ENCODE measurements at regions of chr12 and their contacts with region 1.

Region 1: DNA sequence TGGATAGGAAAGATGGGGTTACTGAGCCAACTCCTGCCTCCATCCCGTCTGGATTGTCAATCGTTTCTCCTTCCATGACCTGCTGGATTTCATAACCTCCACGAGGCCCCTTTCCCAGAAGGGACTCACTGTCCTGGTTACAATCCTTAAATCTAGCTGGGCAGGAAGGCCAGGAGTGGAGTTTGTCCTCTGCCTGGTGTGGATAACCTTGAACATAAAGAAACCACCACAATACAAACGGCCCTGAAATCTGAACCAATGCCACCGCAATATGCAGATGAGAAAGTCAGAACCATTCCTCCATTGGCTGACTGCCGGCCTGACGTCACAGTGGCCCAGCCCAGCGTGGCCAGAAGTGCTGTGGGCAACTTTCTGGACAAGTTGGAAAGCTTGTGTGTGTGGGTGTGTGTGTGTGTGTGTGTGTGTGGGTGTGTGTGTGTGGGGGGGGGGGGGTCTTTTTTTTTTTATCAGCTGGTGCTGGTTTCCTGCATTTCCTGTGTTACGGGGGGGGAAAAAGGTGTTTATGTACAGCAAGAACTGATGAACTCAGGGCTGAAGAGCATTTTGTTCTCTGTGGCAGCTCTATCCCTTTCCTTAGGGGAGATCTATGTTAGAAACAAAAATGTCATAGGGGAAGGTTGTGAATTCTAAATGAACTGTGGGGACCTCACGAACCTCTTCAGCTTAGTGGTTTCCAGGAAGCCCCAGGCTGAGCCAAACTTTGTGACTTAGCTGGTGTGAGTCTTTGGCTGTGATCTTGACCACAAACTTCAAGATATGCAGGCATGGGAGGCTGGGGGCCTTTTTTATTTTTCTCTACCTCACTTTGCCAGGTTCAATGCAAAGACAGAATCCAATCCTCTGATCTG is 81.6 kb upstream of the MED13L start:
- DNase-seq: peak; percentile 94 to 95
- ATAC-seq: peak; percentile 77 to 93 (median 86)
- H3K4me3 ChIP-seq: peak overlapping the region; percentile 49
- H3K27ac ChIP-seq: peak overlapping the region; percentile 74
- H3K4me1 ChIP-seq: peaks cover 31% of the 10 kb centered on the region
- H3K27me3 ChIP-seq: no peaks in the 10 kb centered on the region
- CTCF ChIP-seq: no peak

Region 2: DNA sequence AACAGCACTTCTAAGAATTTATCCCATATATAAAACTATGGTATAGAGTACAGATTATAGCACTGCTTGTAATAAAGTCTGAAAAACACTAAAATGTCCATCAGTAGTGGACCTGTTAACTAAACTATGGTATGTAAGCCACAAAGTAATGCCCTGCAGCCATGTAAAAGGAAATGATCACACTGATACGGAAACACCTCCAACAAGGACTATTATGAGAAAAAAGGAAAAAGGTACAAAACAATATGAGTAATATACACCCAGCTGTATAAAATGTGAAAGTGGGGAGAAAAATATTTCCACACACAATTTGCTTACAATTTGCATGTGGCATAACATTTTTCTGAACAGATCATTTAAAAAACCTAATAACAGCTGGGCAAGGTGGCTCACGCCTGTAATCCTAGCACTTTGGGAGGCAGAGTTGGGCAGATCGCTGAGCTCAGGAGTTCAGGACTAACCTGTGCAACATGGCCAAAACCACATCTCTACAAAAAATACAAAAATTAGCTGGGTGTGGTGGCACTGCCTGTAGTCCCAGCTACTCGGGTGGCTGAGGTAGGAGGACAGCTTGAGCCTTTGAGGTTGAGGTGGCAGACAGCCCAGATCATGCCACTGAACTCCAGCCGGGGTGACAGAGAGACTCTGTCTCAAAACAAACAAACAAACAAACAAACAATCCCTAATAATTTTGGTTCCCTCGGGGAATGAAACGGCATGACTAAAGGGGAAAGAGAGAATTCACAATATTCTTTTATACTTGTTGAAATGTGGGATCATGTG is 332.2 kb before region 1 on chr12:
- intact Hi-C with region 1: no loop called
- DNase-seq: peak in 1 of 2 donors; percentile 48
- ATAC-seq: peak; percentile 44 to 82 (median 77)
- H3K4me3 ChIP-seq: no peak overlapping the region
- H3K27ac ChIP-seq: no peak overlapping the region
- H3K4me1 ChIP-seq: peaks cover 40% of the 10 kb centered on the region
- H3K27me3 ChIP-seq: no peaks in the 10 kb centered on the region
- CTCF ChIP-seq: no peak

Region 3: DNA sequence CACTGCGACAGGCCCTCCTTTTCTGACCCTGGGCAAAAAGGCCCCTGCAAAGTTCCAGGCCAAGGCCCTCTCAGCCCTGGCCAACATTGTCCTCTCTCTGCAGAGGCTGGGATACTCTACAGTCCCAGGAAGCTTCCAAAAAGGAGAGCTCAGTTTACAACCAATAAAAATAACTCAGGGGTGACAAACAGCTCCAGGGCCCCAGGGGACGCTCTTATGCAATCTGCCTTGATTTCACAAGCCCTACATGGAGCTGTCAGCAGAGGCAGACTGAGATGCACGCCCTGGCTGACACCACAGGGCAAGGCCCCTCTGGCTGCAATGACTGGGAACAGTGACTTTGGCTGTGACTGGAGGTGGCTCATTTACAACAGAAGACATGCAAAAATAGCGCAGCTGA is 47.4 kb after region 1 on chr12:
- intact Hi-C with region 1: loop called in 1 of 2 experiments (anchors 5 kb)
- DNase-seq: peak; percentile 95 to 97
- ATAC-seq: peak; percentile 98 to 99 (median 98)
- H3K4me3 ChIP-seq: no peak overlapping the region
- H3K27ac ChIP-seq: peak overlapping the region; percentile 46
- H3K4me1 ChIP-seq: peaks cover 8% of the 10 kb centered on the region
- H3K27me3 ChIP-seq: no peaks in the 10 kb centered on the region
- CTCF ChIP-seq: no peak

Measured in psoas muscle (tissue), 8 donors.